ENCODE measurements at regions of chr4 and their contacts with region 1.

Region 1: DNA sequence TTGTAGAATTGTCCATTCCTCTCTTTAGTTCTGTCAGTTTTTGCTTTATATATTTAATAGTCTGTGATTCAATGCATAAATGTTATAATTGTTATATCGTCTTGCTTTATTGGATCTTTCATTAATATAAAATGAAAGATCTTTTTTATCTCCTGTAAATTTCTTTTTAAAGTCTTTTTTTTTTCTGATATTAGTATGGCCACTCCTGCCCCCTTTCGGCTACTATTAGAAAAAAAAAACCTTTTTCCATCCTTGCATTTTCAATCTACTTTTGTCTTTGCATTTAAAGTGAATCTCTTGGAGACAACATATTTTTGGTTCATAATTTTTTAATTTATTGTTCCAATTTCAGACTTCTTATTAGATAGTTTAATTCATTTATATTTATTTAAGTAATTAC is 677.4 kb upstream of the NDST4 start:
- DNase-seq: no peak
- H3K4me3 ChIP-seq: no peak overlapping the region
- H3K27ac ChIP-seq: no peak overlapping the region
- H3K4me1 ChIP-seq: no peaks in the 10 kb centered on the region
- H3K27me3 ChIP-seq: no peaks in the 10 kb centered on the region
- CTCF ChIP-seq: no peak

Region 2: DNA sequence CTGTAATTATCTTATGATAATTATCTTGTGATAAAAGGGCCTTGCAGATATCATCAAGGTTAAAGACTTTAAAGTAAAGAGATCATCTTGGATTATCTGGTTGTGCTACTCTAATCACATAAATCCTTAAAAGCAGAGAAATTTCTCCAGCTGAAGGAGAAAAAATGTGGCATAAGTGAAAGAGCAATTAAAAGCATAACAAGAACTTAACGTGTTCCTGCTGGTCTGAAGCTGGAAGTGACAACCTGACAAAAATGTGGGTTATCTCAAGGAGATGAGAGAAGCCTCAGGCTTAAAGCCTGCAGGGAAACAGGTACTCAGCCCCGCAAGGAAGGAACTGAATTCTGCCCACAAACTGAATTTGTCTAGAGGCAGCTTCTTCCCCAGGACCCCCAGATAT is 228.3 kb before region 1 on chr4:
- CTCF ChIA-PET with region 1: no interaction called
- dilution Hi-C with region 1: no loop called
- in situ Hi-C with region 1: no loop called
- intact Hi-C with region 1: loop called (anchors 10 kb)
- DNase-seq: no peak
- H3K4me3 ChIP-seq: no peak overlapping the region
- H3K27ac ChIP-seq: no peak overlapping the region
- H3K4me1 ChIP-seq: no peaks in the 10 kb centered on the region
- H3K27me3 ChIP-seq: no peaks in the 10 kb centered on the region
- CTCF ChIP-seq: no peak

Region 3: DNA sequence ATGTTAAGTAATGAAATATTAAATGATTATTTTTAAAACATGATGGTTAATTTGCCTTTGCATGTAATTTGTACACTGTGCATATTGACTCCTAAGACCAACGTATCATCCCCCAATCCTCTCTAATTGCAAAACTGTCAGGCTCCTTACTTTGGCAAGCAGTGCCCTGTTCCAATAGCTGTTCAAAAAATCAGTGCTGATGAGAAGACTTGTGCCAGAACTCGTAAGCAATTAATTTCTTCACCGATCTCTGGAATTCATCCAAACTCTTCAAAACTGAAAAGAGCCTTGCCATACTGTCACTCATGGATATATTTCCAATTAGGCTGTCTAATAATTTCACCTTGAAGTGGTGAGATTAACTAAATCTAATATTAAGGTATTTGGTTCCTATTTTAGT is 183.5 kb before region 1 on chr4:
- CTCF ChIA-PET with region 1: no interaction called
- dilution Hi-C with region 1: no loop called
- in situ Hi-C with region 1: no loop called
- intact Hi-C with region 1: no loop called
- DNase-seq: no peak
- H3K4me3 ChIP-seq: no peak overlapping the region
- H3K27ac ChIP-seq: no peak overlapping the region
- H3K4me1 ChIP-seq: no peaks in the 10 kb centered on the region
- H3K27me3 ChIP-seq: peaks cover 2% of the 10 kb centered on the region
- CTCF ChIP-seq: no peak

Measured in mammary epithelial cell (primary cell).